Astrocyte of the cerebellum (primary cell): ENCODE measurements at regions of chr4 and their contacts with region 1.

Region 1: GRCh38 chr4:73487233-73487632 is 5.7 kb downstream of the AFM start:
- DNase-seq: no peak
- H3K4me3 ChIP-seq: no peak overlapping the region
- CTCF ChIP-seq: no peak

Region 2: GRCh38 chr4:73527196-73527595 is 40.0 kb after region 1 on chr4:
- in situ Hi-C with region 1: no loop called
- DNase-seq: no peak
- H3K4me3 ChIP-seq: no peak overlapping the region
- CTCF ChIP-seq: no peak

Region 3: GRCh38 chr4:73540826-73541225 is 53.6 kb after region 1 on chr4:
- in situ Hi-C with region 1: loop called (anchors 5 kb)
- DNase-seq: no peak
- H3K4me3 ChIP-seq: no peak overlapping the region
- CTCF ChIP-seq: no peak

Region 4: DNA sequence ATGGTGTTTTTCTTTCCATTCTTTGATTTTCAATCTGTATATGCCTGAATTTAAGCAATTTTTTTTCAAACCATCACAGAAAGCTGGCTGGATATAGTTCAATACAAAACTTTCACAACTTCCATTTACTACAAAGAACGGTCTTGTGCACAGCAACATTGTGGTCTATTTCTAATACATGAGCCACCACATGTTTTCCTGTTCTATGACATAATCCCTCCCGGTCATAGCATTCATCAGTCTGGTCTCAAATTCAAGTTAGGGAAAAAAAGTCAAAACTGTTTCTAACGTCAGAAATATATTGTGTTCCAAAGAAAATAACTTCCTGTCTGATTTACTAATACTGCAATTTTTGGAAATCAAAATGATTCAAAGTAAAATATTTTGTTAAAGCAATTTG is 341.7 kb after region 1 on chr4:
- in situ Hi-C with region 1: no loop called
- DNase-seq: no peak
- H3K4me3 ChIP-seq: no peak overlapping the region
- CTCF ChIP-seq: no peak

Region 5: GRCh38 chr4:73853246-73853704 is 366.0 kb after region 1 on chr4 and contains the start of gene PF4V1:
- in situ Hi-C with region 1: no loop called
- DNase-seq: no peak
- H3K4me3 ChIP-seq: no peak within 1 kb of the TSS
- CTCF ChIP-seq: peak; percentile 33

Region 6: DNA sequence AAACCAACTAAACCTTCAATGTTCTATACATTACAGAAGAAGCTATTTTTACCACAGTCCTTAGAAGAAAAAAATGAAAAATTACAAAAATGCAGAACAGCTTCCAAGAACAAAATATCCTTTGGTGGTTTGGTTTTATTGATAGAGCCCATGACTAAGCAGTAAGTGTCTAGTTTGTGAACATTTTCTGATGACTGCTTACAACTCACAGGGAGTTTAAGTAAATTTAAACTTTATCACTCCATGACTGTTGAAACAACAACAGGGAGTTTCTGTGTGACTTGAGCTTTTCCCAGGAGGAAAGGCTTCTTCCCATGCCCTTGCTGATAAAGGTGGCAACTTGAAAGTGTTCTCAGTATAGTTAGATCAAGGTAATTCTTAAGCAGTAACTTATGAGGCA is 491.7 kb after region 1 on chr4:
- in situ Hi-C with region 1: no loop called
- DNase-seq: peak; percentile 69
- H3K4me3 ChIP-seq: no peak overlapping the region
- CTCF ChIP-seq: no peak